Activated B cell treated with CpG ODN at 0.5 μM for 24 hours (primary cell): ENCODE measurements at regions of chr7 and their contacts with region 1.

Region 1: DNA sequence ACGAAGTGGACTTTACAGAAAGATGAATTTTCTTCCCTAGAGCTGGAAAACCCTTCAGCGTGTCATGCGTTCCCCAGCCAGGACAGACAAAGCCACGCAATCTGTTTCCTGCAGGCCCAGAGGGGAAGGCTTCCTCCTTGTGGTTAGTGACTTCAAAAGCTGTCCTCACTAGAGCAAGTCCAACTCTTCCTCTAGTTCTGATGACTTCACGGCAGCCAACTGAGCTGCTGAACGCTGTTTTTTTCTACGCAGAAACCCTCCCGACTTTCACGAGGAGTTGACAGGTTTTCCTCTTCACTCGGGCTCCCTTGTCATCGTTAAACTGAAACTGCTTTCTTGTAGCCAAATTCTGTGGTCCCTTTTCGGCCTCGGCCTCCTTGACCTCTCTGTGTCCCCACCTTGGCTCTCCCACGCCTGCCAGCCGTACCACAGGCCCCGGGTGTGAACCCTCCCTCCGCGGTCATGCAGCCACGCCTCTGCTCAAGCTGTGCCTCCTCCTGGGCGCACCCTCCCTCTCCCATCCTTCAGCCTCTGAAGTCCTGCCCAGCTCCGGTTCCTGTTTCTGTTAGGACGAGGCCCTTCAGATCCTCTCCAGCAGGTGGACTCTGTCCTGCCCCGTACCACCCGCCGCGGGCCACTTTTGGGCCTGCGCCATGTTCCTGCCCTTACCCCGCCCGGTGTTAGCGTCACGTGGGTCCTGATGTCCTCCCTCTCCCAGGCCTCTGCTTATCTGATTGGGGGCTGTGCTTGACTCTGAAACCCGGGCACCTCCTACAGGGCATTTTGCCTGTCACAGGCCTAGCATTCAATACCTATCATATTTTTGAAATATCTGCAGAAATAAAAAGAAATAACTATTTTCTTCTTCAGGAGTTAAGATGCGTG is 39.3 kb downstream of the CUX1 start:
- DNase-seq: peak; percentile 76
- ATAC-seq: peak; percentile 86
- H3K4me3 Mint-ChIP-seq: peak overlapping the region; percentile 92
- H3K27ac Mint-ChIP-seq: peak overlapping the region; percentile 98
- H3K4me1 Mint-ChIP-seq: peaks cover 74% of the 10 kb centered on the region
- H3K27me3 Mint-ChIP-seq: no peaks in the 10 kb centered on the region
- CTCF ChIP-seq: no peak

Region 2: GRCh38 chr7:101669307-101669706 is 187.4 kb before region 1 on chr7:
- CTCF ChIA-PET with region 1: no interaction called
- POLR2A ChIA-PET with region 1: no interaction called
- intact Hi-C with region 1: no loop called
- DNase-seq: no peak
- ATAC-seq: no peak
- H3K4me3 Mint-ChIP-seq: no peak overlapping the region
- H3K27ac Mint-ChIP-seq: no peak overlapping the region
- H3K4me1 Mint-ChIP-seq: no peaks in the 10 kb centered on the region
- H3K27me3 Mint-ChIP-seq: no peaks in the 10 kb centered on the region
- CTCF ChIP-seq: no peak

Region 3: GRCh38 chr7:101743241-101743994 is 113.3 kb before region 1 on chr7:
- CTCF ChIA-PET with region 1: interaction called, 3 read pairs
- POLR2A ChIA-PET with region 1: no interaction called
- intact Hi-C with region 1: loop called (anchors 1 kb)
- DNase-seq: peak; percentile 53
- ATAC-seq: peak; percentile 63
- H3K4me3 Mint-ChIP-seq: peak overlapping the region; percentile 82
- H3K27ac Mint-ChIP-seq: no peak overlapping the region
- H3K4me1 Mint-ChIP-seq: peaks cover 52% of the 10 kb centered on the region
- H3K27me3 Mint-ChIP-seq: no peaks in the 10 kb centered on the region
- CTCF ChIP-seq: no peak

Region 4: DNA sequence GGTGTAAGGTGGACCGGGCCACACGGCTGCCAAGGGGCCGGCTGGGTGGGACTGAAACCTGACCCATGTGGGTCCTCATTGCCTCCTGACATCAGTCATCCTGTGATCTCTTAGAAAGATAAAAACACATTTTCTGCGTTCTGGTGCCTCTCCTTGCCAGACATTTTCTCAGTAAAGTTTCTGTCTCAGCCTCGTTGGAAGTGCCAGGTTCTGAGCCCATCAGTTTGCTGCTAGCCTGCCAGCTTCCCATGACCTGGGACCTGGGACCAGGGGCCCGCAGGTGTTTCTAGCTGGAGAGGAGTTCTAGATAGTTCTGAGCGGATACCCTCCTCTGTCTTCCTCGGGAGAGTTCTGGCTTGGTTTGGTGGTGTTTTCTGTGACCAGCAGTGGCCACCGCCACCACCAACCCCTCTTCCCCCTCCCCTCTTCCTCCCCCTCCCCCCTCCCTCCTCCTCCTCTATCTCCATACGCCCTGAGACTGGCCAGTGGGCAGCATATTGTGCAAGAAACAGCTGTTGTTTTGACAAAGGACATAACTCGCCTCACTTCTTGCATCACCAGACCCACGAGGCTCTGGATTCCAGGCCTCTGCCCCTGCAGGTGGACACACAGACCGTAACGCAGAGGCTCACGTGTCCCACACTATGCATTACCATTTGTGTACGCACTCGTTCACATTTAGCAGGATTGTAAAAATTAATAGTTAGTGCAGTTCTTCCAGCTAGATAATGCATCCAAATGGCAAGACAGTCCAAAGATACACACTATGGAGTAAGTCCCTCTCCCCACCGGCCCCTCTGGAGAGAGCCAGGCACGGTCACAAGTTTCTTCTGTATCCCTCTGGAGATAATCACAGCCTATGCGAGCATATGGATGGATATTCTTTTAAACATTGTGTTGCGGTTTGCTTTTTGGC is 55.3 kb after region 1 on chr7:
- CTCF ChIA-PET with region 1: no interaction called
- POLR2A ChIA-PET with region 1: no interaction called
- intact Hi-C with region 1: no loop called
- DNase-seq: no peak
- ATAC-seq: no peak
- H3K4me3 Mint-ChIP-seq: no peak overlapping the region
- H3K27ac Mint-ChIP-seq: no peak overlapping the region
- H3K4me1 Mint-ChIP-seq: peaks cover 26% of the 10 kb centered on the region
- H3K27me3 Mint-ChIP-seq: no peaks in the 10 kb centered on the region
- CTCF ChIP-seq: no peak

Region 5: DNA sequence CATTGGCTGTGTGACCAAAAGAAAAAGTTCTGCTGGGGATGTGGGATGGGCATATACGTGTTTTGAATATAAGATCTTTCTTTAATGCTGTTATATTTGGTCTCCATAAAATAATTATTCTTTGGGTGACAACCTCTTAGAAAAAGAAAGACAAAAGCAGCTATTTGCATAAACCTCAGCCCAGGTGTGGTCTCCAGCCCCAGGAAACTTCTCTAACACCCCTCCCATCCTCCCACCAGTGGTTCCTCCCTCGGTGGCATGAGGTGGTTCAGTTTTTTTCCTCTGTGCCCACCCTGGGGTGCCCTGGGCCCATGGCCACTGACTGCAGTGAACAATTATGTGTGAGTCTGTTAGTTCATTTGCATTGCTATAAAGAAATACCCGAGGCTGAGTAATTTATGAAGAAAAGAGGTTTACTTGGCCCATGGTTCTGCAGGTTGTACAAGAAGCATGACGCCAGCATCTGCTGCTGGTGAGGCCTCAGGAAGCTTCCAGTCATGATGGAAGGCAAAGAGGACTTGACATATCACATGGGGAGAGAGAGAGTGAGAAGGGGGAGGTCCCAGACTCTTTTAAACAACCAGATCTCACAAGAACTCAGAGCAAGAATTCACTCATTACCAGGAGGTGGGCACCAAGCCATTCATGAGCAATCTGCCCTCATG is 126.6 kb after region 1 on chr7:
- CTCF ChIA-PET with region 1: no interaction called
- POLR2A ChIA-PET with region 1: no interaction called
- intact Hi-C with region 1: loop called (anchors 2 kb)
- DNase-seq: no peak
- ATAC-seq: no peak
- H3K4me3 Mint-ChIP-seq: no peak overlapping the region
- H3K27ac Mint-ChIP-seq: peak overlapping the region; percentile 30
- H3K4me1 Mint-ChIP-seq: peaks cover 50% of the 10 kb centered on the region
- H3K27me3 Mint-ChIP-seq: no peaks in the 10 kb centered on the region
- CTCF ChIP-seq: no peak

Region 6: DNA sequence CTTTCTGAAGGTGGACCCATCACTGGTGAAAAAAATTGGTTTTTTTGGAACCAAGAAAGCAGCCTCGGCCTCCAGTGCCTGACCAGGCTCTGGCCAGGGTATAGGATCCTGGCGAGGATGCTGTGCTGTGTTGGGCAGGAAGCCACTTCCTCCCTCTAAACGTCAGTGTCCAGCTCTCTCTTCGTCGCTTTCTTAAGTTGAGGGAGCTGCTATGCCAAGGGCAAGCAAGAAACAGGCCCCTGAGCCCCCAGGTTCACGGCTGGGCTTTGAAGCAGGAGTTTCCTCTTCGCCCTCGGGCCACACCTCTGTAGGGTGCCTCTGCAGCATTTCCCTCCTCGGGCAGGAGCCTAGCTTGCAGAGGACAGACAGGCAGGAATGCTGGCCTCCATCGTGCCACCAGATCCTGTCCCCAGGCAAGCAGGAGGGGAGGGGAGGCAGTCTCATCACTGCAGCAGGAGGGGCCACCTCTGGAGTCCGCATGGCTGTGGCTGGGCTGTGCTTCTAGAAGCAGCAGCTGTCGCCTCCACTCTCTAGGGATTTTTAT is 142.0 kb after region 1 on chr7:
- CTCF ChIA-PET with region 1: no interaction called
- POLR2A ChIA-PET with region 1: no interaction called
- intact Hi-C with region 1: no loop called
- DNase-seq: no peak
- ATAC-seq: no peak
- H3K4me3 Mint-ChIP-seq: no peak overlapping the region
- H3K27ac Mint-ChIP-seq: no peak overlapping the region
- H3K4me1 Mint-ChIP-seq: peaks cover 38% of the 10 kb centered on the region
- H3K27me3 Mint-ChIP-seq: no peaks in the 10 kb centered on the region
- CTCF ChIP-seq: no peak